ENCODE measurements at regions of chr5 and their contacts with region 1.

Region 1: DNA sequence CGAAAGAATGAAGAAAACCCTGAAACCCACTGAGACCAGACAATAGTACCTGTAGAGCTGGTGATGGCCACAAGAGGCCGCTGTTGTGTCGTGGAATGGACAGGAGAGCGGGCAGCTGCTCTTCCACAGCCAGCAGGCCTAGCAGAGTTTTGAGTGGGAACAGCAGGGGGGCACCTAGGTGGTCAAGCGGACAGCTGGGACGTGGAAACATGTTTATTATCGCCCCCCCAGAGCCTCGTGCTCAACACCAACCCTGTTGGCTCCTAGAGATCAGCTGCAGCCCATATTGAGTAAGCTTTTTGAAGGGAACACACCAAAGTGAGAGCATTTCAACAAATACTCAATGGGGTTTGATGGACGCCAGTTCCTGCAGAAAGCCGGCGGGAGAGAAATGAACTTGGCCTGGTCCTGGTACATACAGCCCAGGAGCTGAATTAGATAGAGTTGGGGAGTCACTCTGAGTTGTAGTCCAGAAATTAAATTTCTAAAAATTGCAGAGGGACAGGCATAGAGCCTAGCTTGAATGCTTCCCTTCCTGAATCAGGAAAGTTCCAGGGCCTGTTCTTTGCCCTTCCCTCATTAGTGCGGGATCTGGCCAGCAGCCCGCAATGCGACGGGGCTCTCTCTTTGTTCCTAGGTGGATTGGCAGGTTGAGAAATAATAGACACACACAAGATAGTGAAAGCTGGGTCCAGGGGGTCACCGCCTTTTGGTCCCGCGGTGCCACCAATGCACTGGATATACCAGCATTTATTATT is 33.8 kb downstream of the MFAP3 start:
- DNase-seq: peak; percentile 80
- ATAC-seq: peak; percentile 97
- H3K4me3 ChIP-seq: peak overlapping the region; percentile 56
- H3K27ac ChIP-seq: no peak overlapping the region
- H3K4me1 ChIP-seq: peaks cover 3% of the 10 kb centered on the region
- H3K27me3 ChIP-seq: no peaks in the 10 kb centered on the region
- CTCF ChIP-seq: peak; percentile 90

Region 2: GRCh38 chr5:154461531-154461930 is 388.9 kb after region 1 on chr5:
- CTCF ChIA-PET with region 1: no interaction called
- POLR2A ChIA-PET with region 1: no interaction called
- intact Hi-C with region 1: loop called (anchors 2 kb)
- DNase-seq: peak; percentile 19
- ATAC-seq: peak; percentile 49
- H3K4me3 ChIP-seq: no peak overlapping the region
- H3K27ac ChIP-seq: no peak overlapping the region
- H3K4me1 ChIP-seq: no peaks in the 10 kb centered on the region
- H3K27me3 ChIP-seq: no peaks in the 10 kb centered on the region
- CTCF ChIP-seq: peak; percentile 30; the same call in 1 of the 2 replicates

Region 3: DNA sequence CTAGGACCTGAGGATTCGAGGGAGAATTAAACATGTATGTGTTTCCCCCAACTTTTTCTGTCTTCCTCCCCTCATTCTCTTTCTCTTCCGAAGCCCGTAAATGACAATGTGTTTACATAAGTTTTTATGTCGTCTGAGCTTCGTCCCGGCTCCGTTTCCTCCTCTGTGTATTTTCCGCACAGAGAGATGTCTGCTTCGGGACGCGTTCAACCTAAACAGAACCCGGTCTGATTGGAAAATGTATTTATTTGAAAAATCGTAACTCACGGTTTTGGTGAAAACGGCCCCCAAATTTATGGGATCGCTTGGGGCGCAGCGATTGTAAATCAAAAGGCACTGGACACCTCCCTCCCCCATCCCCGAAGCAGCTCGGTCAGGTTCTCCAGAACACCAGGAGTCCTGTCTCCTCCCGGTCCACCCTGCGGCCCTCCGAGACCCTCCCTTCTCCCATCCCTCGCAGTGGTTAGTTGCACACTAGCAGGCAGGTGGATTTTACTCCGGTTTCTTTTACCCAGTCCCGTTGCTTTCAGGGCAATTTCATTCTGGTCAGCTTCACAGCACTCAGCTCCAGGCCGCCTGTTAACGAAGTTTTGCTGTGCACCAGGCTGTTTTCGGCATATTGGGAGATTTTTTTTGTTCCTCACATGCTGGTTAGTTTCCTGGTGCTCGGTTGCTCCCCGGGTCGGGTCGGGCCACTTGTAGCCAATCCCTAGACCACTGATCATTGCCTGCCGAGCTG is 411.2 kb after region 1 on chr5:
- CTCF ChIA-PET with region 1: interaction called, 14 read pairs
- POLR2A ChIA-PET with region 1: no interaction called
- intact Hi-C with region 1: no loop called
- DNase-seq: no peak
- ATAC-seq: no peak
- H3K4me3 ChIP-seq: no peak overlapping the region
- H3K27ac ChIP-seq: no peak overlapping the region
- H3K4me1 ChIP-seq: no peaks in the 10 kb centered on the region
- H3K27me3 ChIP-seq: peaks cover 96% of the 10 kb centered on the region
- CTCF ChIP-seq: no peak